Posterior vena cava (tissue), 2 donors: ENCODE measurements at regions of chr6 and their contacts with region 1.

Region 1: DNA sequence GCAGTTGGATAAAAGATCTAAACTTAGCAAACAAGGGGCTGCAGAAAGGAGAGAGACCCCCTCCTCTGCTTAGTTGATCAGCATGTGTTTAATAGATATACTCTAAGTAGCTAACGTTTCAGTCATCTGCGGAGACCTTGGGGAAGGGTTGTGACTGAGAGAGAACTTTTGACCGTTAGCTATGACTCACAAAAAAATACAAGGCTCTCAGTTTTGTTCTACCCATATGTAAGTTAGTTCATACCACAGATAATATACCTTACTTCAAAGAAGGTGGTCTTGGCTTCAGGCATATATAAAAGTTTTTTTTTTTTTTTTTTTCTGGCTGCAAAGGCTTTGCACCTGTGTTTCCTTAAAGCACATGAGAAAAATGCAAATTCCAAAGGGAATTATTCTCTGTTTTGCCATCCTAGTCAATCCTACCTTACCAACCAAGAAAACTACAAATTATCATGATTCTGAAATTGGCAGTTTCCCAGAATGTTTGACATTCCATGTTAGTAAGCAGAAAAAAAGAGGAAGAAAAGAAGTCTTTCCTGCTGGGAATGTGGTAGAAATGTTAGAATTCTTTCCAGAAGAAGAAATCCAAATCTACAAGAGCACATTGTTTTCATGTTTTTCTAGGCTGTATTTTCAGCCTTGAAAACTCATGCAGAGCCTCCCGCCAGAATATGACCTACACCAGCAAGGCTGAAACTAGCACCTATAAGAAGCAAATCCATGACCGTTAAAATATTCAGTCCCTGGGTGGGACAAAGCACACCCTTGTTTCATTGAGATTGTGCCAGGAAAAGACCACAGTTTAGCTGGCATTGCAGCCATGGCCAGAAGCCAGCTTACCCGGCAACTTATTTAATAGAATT is 259.2 kb downstream of the GJA1 start:
- DNase-seq: no peak

Region 2: GRCh38 chr6:120556491-120556890 is 1138.1 kb before region 1 on chr6:
- intact Hi-C with region 1: loop called in 1 of 2 experiments (anchors 5 kb)
- DNase-seq: no peak

Region 3: GRCh38 chr6:121755485-121755884 is 60.9 kb after region 1 on chr6:
- intact Hi-C with region 1: no loop called
- DNase-seq: no peak